Posterior cingulate gyrus (tissue), 11 donors: ENCODE measurements at regions of chr9 and their contacts with region 1.

Region 1: DNA sequence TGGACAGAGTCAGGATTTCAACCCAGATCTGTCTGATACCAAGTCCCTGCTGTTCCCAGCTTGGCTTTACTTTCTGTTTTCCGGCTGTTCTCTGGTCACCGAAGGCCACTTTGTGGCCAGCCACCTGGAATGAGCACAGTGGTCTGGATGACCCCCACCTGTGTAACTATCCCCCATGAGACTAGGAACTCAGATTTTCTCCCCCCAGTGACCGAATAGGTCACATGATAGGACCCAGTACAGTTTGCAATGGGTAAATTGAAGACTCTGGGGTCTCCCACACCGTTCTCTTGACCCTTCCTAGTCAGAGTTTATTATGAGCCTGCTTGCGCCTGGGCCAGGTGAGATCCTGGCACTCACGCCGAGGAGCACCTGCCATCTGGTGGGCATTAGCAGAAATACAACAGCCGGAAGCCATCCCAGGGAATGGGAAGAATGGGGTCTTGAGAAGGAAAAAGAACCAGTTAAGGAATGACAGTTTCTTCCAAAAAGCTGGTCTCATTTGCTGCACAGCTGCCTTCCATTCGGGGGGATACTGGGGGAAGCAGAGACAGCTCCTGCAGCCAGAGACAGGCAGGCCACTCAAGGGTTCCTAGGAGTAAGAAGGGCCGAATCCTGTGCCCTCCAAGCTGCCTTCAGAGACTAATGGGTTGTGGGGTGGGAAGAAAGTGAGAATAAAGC is 7.1 kb downstream of the PHYHD1 start:
- DNase-seq: peak in 7 of 10 donors; percentile 51 to 91 (median 60)

Region 2: GRCh38 chr9:128847803-128848202 is 80.1 kb before region 1 on chr9:
- intact Hi-C with region 1: loop called (anchors 1 kb)
- DNase-seq: no peak